Left cardiac atrium (tissue), 4 donors: ENCODE measurements at regions of chr2 and their contacts with region 1.

Region 1: DNA sequence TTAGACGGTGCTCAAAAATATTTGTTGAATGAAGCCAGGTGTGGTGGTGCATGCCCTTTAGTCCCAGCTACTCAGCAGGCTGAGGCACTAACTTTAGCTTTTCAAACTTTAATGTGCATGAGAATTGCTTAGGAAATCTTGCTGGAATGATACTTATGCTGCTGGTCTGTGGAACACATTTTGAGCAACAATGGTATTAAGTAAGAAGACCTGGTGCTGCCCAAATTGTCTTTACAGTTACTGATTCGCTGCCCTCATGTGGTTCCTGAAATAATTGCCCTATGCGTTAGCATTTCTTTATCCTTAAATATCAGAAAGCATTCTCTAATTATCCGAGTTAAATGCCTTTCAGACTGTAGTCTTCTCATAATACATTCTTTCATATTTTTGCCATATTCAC is 76.0 kb upstream of the SESTD1 start:
- DNase-seq: no peak
- ATAC-seq: peak in 1 of 2 donors; percentile 56

Region 2: DNA sequence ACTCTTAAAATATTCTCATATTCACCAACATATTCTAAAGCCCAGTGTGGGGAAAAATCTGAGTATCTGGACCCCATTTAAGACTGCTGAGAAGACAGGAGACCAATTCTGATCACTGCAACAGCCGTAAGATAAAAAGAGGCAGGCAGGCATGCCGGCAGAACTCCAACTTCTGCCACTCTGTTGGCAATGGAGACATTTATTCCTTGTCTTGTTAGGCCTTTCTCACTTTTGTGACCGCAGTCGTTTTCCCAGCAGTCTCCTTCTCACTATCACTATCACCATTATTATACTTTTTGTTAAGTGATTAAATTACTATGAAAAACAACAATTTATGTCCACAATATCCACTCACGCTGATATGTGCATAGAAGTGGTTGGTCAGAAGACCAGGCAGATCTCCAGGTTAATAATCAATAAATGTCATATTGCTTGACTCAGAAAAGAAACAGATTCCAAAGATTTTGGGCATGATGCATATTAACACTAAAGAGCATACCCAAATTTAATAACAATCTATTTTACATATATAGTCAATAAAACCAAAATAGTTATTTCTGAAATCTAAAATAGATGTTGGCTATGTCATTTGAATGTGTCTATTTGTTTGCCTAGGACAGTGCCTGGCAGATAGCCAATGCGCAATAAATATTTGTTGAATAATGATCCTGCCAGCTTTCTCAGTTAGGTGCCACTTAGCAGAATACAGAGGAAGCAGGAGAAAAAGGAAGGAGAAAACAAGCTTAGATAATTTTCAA is 114.3 kb before region 1 on chr2:
- intact Hi-C with region 1: loop called in 1 of 2 experiments (anchors 5 kb)
- DNase-seq: no peak
- ATAC-seq: peak in 1 of 2 donors; percentile 57

Region 3: DNA sequence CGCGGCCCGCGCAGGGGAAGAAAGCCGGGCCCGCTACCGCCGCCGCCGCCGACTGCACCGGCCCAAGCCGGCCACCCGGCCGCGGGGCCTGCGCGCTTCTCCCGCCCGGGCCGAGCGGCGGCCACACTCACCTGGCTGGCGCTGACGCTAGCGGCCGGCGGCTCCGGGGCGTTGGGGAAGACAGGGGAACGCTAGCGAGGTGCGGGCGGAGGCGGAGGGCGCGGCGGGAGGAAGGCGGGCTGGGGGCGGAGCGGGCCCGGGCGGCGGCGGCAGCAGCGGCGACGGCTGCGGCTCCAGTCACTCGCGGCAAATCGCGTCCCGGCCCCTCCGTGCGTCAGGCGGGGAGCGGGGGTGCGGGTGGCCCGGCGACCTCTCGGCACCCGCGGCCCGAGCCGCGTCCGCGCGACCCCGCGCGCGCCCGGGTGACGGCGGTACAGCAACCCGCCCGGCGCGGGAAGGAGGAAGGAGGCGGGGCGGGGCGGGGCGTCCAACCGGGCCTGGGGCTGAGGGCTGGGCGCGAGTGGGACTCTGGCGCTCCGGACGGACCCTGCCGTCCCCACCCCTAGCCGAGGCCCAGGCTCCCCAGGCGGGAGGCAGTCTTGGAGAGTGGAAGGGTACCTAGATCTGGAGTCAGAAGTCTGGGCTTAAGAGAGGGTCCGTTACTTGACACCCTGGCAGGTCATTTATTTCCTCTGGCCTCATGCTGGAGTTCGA is 76.1 kb before region 1 on chr2 and contains the start of gene SESTD1:
- intact Hi-C with region 1: loop called in 1 of 2 experiments (anchors 10 kb)
- DNase-seq: peak; percentile 83
- ATAC-seq: peak; percentile 84 to 88
- total RNA-seq, gene SESTD1: 58.5 to 59.9 TPM